ENCODE measurements at regions of chr12 and their contacts with region 1.

Region 1: DNA sequence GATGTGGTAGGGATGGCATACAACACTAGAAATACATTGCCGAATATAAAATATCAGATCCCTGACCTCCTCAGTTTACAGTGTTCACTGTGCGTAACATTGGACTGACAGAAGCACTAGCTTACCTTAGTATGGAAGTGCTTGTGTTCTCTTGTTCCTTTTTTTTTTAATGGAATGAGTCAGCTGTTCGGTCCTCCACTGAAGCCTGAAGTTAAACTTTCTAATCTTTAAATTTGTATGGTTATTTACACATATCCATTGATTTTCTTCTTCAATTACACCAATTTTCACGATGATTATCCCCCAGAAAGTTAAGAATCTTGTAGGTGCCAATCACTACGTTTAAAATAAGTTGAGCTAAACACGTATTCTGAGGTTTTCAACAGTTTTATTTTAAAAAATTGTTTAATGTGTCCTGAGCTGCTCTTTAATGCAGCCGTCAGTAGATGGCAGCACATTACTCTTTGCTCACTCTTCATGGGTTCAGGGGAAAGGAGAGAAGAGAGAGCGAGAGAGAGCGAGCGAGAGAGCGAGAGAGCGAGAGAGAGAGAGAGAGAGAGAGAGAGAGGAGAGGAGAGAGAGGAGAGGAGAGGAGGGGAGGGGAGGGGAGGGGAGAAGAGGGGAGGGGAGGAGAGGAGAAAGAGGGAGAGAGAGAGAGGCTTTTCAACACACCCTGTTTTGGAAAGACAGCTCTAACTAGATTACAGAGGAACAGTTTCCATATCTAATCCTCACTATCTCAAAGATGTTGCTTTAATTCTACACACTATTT is 134.7 kb upstream of the SCAF11 start:
- DNase-seq: peak in 5 of 10 donors; percentile 20 to 66 (median 52)
- H3K4me3 ChIP-seq: peak overlapping the region in 56 of 59 donors; percentile 3 to 63 (median 42)
- H3K27ac ChIP-seq: peak overlapping the region in 31 of 59 donors; percentile 2 to 76 (median 53)
- H3K27me3 ChIP-seq: no peaks in the 10 kb centered on the region
- CTCF ChIP-seq: peak; percentile 48 to 79 (median 68)

Region 2: DNA sequence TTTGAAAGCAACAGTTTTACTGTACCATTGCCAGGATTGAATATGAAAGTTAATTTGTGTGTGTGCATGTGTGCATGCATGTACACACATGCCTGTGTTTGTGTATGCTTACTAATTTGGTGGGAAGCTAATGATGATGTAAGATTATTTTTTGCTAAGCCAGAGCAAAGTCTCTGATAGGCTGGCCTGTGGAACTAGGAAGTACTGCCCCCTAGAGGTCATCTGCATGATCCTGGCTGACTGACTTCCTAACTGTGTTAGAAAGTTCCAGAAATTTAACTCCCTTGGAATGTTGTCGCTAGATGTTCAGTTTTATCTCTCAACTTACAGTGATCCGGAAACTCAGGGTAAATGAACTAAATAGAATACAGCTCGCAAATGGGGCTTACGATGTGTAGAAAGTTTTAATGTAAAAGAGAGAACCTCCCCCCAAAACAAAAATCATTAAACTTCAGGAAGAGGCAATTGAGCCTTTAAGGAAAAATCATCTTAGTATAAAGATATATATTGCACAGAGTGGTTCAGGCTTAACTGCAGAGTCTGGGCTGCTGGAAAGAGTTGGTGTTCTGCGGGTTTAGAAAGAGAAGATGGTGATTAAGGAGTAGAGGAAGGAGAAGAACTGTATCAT is 178.1 kb after region 1 on chr12:
- intact Hi-C with region 1: loop called (anchors 1 to 10 kb)
- DNase-seq: peak in 2 of 10 donors; percentile 14 to 46
- H3K4me3 ChIP-seq: no peak overlapping the region
- H3K27ac ChIP-seq: no peak overlapping the region
- H3K27me3 ChIP-seq: no peaks in the 10 kb centered on the region
- CTCF ChIP-seq: peak in 55 of 56 donors; percentile 29 to 74 (median 58)

Region 3: GRCh38 chr12:46382964-46383653 is 258.1 kb after region 1 on chr12:
- intact Hi-C with region 1: loop called (anchors 5 to 10 kb)
- DNase-seq: peak; percentile 93 to 99 (median 95)
- H3K4me3 ChIP-seq: peak overlapping the region; percentile 51 to 93 (median 83)
- H3K27ac ChIP-seq: peak overlapping the region; percentile 92 to 100 (median 99)
- H3K27me3 ChIP-seq: no peaks in the 10 kb centered on the region
- CTCF ChIP-seq: peak in 45 of 56 donors; percentile 11 to 63 (median 36)

Region 4: GRCh38 chr12:46661110-46661845 is 536.2 kb after region 1 on chr12:
- intact Hi-C with region 1: loop called in 1 of 2 experiments (anchors 5 kb)
- DNase-seq: no peak
- H3K4me3 ChIP-seq: no peak overlapping the region
- H3K27ac ChIP-seq: peak overlapping the region in 6 of 59 donors; percentile 9 to 66 (median 39)
- H3K27me3 ChIP-seq: no peaks in the 10 kb centered on the region
- CTCF ChIP-seq: peak; percentile 47 to 81 (median 71)

Region 5: GRCh38 chr12:46944088-46944487 is 819.1 kb after region 1 on chr12:
- intact Hi-C with region 1: no loop called
- DNase-seq: no peak
- H3K4me3 ChIP-seq: no peak overlapping the region
- H3K27ac ChIP-seq: no peak overlapping the region
- H3K27me3 ChIP-seq: no peaks in the 10 kb centered on the region
- CTCF ChIP-seq: peak in 6 of 56 donors; percentile 8 to 16 (median 9)